ENCODE measurements at regions of chr15 and their contacts with region 1.

Region 1: GRCh38 chr15:51162865-51163762 is 68.4 kb upstream of the TNFAIP8L3 start:
- DNase-seq: peak; percentile 78
- H3K4me3 Mint-ChIP-seq: peak overlapping the region; percentile 60
- H3K27ac Mint-ChIP-seq: no peak overlapping the region
- H3K4me1 Mint-ChIP-seq: peaks cover 10% of the 10 kb centered on the region
- H3K27me3 Mint-ChIP-seq: no peaks in the 10 kb centered on the region
- CTCF ChIP-seq: peak; percentile 90

Region 2: DNA sequence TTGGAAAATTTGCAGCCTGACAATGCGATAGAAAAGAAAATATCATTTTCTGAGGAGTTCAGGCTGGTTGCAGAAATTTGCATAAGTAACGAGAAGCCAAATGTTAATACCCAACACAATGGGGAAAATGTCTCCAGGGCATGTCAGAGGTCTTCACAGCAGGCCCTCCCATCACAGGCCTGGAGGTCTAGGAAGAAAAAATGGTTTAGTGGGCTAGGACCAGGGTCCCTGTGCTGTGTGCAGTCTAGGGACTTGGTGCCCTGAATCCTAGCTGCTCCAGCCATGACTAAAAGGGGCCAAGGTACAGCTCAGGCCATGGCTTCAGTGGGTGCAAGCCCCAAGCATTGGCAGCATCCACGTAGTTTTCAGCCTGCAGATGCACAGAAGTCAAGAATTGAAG is 269.1 kb before region 1 on chr15:
- CTCF ChIA-PET with region 1: no interaction called
- POLR2A ChIA-PET with region 1: no interaction called
- intact Hi-C with region 1: no loop called
- DNase-seq: no peak
- H3K4me3 Mint-ChIP-seq: no peak overlapping the region
- H3K27ac Mint-ChIP-seq: no peak overlapping the region
- H3K4me1 Mint-ChIP-seq: peaks cover 5% of the 10 kb centered on the region
- H3K27me3 Mint-ChIP-seq: no peaks in the 10 kb centered on the region
- CTCF ChIP-seq: no peak

Region 3: DNA sequence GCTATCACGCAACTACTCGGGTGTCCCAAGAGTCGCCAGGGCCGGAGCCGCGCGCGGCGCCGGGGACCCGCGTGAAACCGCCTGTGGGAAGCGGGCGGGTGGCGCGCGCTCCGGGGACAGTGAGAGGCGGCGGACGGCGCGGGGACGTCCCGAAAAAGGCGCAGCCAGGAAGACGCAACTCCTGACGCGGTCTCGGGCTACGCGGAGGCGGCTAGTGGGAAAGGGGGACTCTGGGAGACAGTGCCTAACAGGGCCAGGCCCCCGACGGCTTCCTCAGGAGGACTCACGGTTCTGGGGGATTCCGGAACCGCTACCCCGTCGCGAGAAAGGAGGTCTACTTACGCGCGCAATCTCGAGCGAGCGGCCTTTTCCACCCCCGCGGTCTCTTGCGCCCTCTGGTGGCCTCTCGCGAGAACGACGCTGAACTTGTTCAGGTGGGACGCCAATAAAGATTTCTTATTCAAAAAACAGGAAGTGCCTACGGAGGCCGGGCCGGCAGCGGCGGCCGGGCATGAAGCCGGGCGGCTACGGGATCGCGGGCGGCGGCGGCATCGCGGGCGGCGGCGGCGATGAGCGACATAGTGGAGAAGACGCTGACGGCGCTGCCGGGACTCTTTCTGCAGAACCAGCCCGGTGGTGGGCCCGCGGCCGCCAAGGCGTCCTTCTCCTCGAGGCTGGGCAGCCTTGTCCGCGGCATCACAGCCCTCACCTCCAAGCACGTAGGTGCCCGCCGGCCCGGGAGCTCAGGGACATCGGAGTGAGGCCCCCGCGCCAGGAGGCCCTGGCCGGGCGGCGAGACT is 254.7 kb before region 1 on chr15 and contains the start of gene AP4E1:
- CTCF ChIA-PET with region 1: interaction called, 3 read pairs
- POLR2A ChIA-PET with region 1: interaction called, 18 read pairs
- intact Hi-C with region 1: no loop called
- DNase-seq: peak; percentile 91
- H3K4me3 Mint-ChIP-seq: peak within 1 kb of the TSS; percentile 81
- H3K27ac Mint-ChIP-seq: peak within 1 kb of the TSS; percentile 81
- H3K4me1 Mint-ChIP-seq: no peaks in the 10 kb centered on the region
- H3K27me3 Mint-ChIP-seq: no peaks in the 10 kb centered on the region
- CTCF ChIP-seq: peak; percentile 97
- total RNA-seq, gene AP4E1: 25.5 and 28.2 TPM in 2 replicates

Region 4: GRCh38 chr15:51185213-51186159 is 22.4 kb after region 1 on chr15:
- CTCF ChIA-PET with region 1: interaction called, 21 read pairs
- POLR2A ChIA-PET with region 1: interaction called, 5 read pairs
- intact Hi-C with region 1: no loop called
- DNase-seq: no peak
- H3K4me3 Mint-ChIP-seq: no peak overlapping the region
- H3K27ac Mint-ChIP-seq: no peak overlapping the region
- H3K4me1 Mint-ChIP-seq: peaks cover 3% of the 10 kb centered on the region
- H3K27me3 Mint-ChIP-seq: no peaks in the 10 kb centered on the region
- CTCF ChIP-seq: no peak

Region 5: GRCh38 chr15:51203797-51204196 is 40.7 kb after region 1 on chr15:
- CTCF ChIA-PET with region 1: interaction called, 32 read pairs
- POLR2A ChIA-PET with region 1: interaction called, 3 read pairs
- intact Hi-C with region 1: no loop called
- DNase-seq: peak; percentile 78
- H3K4me3 Mint-ChIP-seq: no peak overlapping the region
- H3K27ac Mint-ChIP-seq: no peak overlapping the region
- H3K4me1 Mint-ChIP-seq: peaks cover 19% of the 10 kb centered on the region
- H3K27me3 Mint-ChIP-seq: no peaks in the 10 kb centered on the region
- CTCF ChIP-seq: no peak

Region 6: GRCh38 chr15:51237816-51238215 is 74.7 kb after region 1 on chr15:
- CTCF ChIA-PET with region 1: interaction called, 11 read pairs
- POLR2A ChIA-PET with region 1: no interaction called
- intact Hi-C with region 1: no loop called
- DNase-seq: peak; percentile 52
- H3K4me3 Mint-ChIP-seq: no peak overlapping the region
- H3K27ac Mint-ChIP-seq: no peak overlapping the region
- H3K4me1 Mint-ChIP-seq: peaks cover 5% of the 10 kb centered on the region
- H3K27me3 Mint-ChIP-seq: no peaks in the 10 kb centered on the region
- CTCF ChIP-seq: no peak

Region 7: GRCh38 chr15:51363383-51363782 is 200.3 kb after region 1 on chr15:
- CTCF ChIA-PET with region 1: interaction called, 15 read pairs
- POLR2A ChIA-PET with region 1: no interaction called
- intact Hi-C with region 1: no loop called
- DNase-seq: no peak
- H3K4me3 Mint-ChIP-seq: no peak overlapping the region
- H3K27ac Mint-ChIP-seq: no peak overlapping the region
- H3K4me1 Mint-ChIP-seq: peaks cover 2% of the 10 kb centered on the region
- H3K27me3 Mint-ChIP-seq: no peaks in the 10 kb centered on the region
- CTCF ChIP-seq: no peak

Region 8: GRCh38 chr15:51390241-51390965 is 227.3 kb after region 1 on chr15:
- CTCF ChIA-PET with region 1: interaction called, 25 read pairs
- POLR2A ChIA-PET with region 1: no interaction called
- intact Hi-C with region 1: no loop called
- DNase-seq: no peak
- H3K4me3 Mint-ChIP-seq: no peak overlapping the region
- H3K27ac Mint-ChIP-seq: no peak overlapping the region
- H3K4me1 Mint-ChIP-seq: no peaks in the 10 kb centered on the region
- H3K27me3 Mint-ChIP-seq: no peaks in the 10 kb centered on the region
- CTCF ChIP-seq: no peak

Region 9: DNA sequence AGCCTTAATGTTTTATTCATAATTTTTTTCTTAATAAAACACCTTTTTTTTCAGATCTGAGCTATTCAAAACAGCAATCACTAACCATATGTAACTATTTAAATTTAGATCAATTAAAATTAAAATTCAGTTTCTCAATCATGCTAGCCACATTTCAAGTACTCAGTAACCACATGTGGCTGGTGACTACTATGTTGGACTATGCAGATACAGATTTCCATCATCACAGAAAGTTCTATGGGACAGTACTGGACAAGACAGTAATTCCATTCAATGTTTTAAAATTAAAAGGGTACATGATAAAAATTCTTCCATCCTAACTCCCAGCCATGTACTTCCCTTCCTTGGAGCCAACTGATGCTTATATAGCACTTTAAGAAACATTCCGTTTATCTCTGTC is 297.7 kb after region 1 on chr15:
- CTCF ChIA-PET with region 1: no interaction called
- POLR2A ChIA-PET with region 1: no interaction called
- intact Hi-C with region 1: no loop called
- DNase-seq: no peak
- H3K4me3 Mint-ChIP-seq: no peak overlapping the region
- H3K27ac Mint-ChIP-seq: no peak overlapping the region
- H3K4me1 Mint-ChIP-seq: no peaks in the 10 kb centered on the region
- H3K27me3 Mint-ChIP-seq: no peaks in the 10 kb centered on the region
- CTCF ChIP-seq: no peak